Sigmoid colon (tissue), 7 donors: ENCODE measurements at regions of chr6 and their contacts with region 1.

Region 1: DNA sequence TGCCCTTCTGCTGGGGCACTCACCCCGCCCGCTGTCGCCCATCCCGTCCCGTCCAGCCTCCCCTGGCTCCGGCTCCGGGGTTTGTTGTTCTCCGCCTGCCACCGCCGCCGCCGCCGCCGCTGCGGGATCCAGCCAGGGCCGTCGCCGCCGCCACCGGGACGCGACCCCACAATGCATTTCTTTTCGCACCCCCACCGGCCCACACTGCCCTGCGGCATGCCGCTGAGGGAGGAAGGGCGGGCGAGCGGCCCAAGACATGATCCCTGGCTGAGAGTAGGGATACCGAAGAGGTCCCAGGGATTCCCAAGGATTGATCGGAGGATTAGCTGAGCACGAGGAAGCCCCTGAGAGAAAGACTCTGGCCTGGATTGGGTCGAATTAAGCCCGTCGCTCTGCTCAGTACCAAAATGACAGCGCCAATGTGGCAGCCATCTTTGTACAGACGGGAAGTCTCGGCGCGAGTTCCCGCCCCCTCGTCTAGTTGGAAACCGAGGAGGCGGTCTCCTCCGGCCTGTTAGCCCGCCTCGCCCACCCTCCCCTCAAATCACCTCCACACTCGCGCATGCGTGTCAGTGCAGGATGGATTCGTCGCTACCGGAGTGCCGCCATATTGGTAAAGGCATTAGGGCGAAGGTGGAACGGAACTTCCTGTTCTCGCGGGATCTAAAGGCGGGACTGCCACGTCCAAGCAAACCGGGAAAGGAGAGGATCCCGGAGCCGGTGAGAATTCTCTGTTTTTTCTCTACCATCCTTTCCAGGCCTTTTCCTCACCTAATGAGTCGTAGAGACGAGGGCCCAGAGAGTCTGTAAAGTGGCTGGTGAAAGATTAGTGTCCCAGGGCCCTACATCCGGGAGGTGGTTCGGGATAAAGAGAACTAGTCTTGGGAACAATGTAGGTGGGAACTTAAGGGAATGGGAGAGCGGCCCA is at the starts of genes RXRB and SLC39A7:
- DNase-seq: peak; percentile 100
- H3K4me3 ChIP-seq: peak within 1 kb of the TSS; percentile 77 to 90 (median 84)
- H3K27ac ChIP-seq: peak within 1 kb of the TSS; percentile 91 to 98 (median 96)
- H3K4me1 ChIP-seq: peaks cover 0 to 68% (median 52%) of the 10 kb centered on the region in 4 donors
- H3K27me3 ChIP-seq: no peaks in the 10 kb centered on the region
- CTCF ChIP-seq: no peak
- EP300 ChIP-seq: peak in 1 of 4 donors; percentile 16
- POLR2A ChIP-seq: peak; percentile 30 to 39
- total RNA-seq, gene RXRB: 27.8 to 32.4 (median 30.4) TPM
- total RNA-seq, gene SLC39A7: 48.7 to 52.1 (median 49.8) TPM

Region 2: GRCh38 chr6:32971581-32972352 is 228.7 kb before region 1 on chr6:
- intact Hi-C with region 1: loop called (anchors 5 kb)
- DNase-seq: peak; percentile 100
- H3K4me3 ChIP-seq: peak overlapping the region; percentile 71 to 87 (median 83)
- H3K27ac ChIP-seq: peak overlapping the region; percentile 98 to 99 (median 98)
- H3K4me1 ChIP-seq: peaks cover 0 to 41% (median 35%) of the 10 kb centered on the region in 4 donors
- H3K27me3 ChIP-seq: no peaks in the 10 kb centered on the region
- CTCF ChIP-seq: no peak
- EP300 ChIP-seq: peak in 2 of 4 donors; percentile 48 to 82
- POLR2A ChIP-seq: peak; percentile 99

Region 3: DNA sequence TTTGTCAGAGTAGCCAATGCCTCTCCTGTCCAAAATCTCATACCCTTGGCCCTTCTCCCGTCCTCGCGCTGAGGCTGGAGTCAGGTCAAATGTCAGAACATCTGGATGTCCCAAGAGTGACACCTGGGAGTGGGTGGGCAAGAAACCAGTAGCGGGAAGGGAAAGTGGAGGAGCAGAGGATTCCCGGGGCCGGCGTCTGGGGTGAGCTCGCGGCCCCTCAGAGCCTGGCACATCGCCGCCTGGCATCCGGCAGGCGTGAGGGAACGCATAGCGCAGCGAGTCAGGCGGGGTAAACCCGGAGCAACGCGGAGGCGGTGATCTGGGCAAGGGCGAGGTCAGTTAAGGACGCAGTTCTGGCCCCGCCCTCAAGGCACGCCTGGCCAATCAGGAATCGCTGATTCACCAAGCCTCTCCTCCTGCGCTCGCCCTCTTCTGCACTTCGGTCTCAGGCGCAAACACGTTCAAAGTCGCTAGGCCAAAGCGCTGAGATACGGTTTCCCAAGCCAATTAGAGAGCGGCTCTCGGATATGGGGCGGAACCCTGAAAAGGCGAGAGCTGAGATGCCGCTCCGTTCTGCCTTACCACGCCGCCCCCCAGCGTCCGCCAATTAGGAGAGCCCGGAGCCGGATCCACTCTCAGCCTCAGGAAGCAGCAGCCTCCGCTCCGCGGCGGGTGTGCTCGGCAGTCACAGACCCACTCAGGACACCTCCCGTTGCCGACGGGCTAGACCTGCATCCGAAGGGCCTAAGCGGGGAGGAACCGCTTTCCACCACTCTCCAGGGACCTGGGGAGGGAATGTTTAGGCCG is 48.6 kb after region 1 on chr6:
- intact Hi-C with region 1: loop called (anchors 2 kb)
- DNase-seq: peak; percentile 99
- H3K4me3 ChIP-seq: peak overlapping the region; percentile 37 to 64 (median 54)
- H3K27ac ChIP-seq: peak overlapping the region; percentile 89 to 94 (median 94)
- H3K4me1 ChIP-seq: peaks cover 0 to 27% (median 24%) of the 10 kb centered on the region in 4 donors
- H3K27me3 ChIP-seq: no peaks in the 10 kb centered on the region
- CTCF ChIP-seq: no peak
- EP300 ChIP-seq: no peak
- POLR2A ChIP-seq: peak; percentile 88 to 95

Region 4: GRCh38 chr6:33425668-33426577 is 225.4 kb after region 1 on chr6:
- intact Hi-C with region 1: loop called (anchors 10 kb)
- DNase-seq: peak; percentile 95
- H3K4me3 ChIP-seq: peak overlapping the region; percentile 35 to 64 (median 54)
- H3K27ac ChIP-seq: peak overlapping the region; percentile 87 to 93 (median 91)
- H3K4me1 ChIP-seq: peaks cover 0 to 59% (median 55%) of the 10 kb centered on the region in 4 donors
- H3K27me3 ChIP-seq: no peaks in the 10 kb centered on the region
- CTCF ChIP-seq: peak in 2 of 4 experiments; percentile 44 to 65
- EP300 ChIP-seq: peak in 1 of 4 donors; percentile 46
- POLR2A ChIP-seq: peak in 1 of 2 donors; percentile 26